ENCODE measurements at regions of chr12 and their contacts with region 1.

Region 1: GRCh38 chr12:48183091-48183875 is at the start of gene CCDC184:
- DNase-seq: peak; percentile 78
- ATAC-seq: peak; percentile 80
- H3K4me3 Mint-ChIP-seq: peak within 1 kb of the TSS; percentile 81
- H3K27ac Mint-ChIP-seq: peak within 1 kb of the TSS; percentile 31
- H3K4me1 Mint-ChIP-seq: peaks cover 20% of the 10 kb centered on the region
- H3K27me3 Mint-ChIP-seq: peaks cover 34% of the 10 kb centered on the region
- total RNA-seq, gene CCDC184: 0.25 to 0.37 TPM

Region 2: DNA sequence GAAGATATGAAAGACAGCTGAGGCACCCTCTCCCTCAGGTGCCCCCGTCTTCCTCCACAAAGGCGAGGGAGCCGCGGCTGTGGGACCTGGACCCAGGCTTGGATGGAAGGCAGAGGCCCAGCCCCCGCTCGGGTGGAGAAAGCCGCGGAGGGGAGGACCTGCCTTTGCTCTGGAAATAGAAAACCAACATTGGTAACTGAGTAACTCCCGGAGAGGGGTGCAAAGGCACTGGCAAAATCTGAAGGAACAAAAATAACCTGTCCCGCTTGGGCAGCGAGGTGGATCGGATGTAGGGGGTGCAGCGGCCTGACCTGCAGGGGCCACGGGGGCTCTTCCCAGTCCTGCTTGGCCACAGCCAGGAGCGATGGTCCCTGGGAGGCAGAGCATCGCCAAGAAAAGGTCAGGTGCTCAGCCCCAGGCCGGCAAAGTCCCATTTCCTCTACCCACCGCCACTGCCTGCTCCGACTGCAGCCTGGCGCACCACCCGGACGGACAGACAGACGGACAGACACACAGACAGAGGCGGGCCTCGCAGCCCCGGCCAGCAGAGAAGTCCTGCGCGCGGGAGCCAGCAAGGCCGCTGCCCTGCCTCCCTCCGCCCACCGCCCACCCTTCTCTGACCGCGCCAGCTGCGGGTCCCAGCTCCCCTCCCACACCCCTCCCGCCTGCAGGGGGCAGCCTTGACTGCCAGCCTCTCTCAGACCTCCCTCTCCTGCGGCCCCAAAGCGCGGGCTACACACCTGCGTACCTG is 241.3 kb before region 1 on chr12:
- CTCF ChIA-PET with region 1: no interaction called
- POLR2A ChIA-PET with region 1: no interaction called
- intact Hi-C with region 1: no loop called
- DNase-seq: peak; percentile 60
- ATAC-seq: peak; percentile 57
- H3K4me3 Mint-ChIP-seq: no peak overlapping the region
- H3K27ac Mint-ChIP-seq: no peak overlapping the region
- H3K4me1 Mint-ChIP-seq: peaks cover 4% of the 10 kb centered on the region
- H3K27me3 Mint-ChIP-seq: peaks cover 16% of the 10 kb centered on the region

Region 3: DNA sequence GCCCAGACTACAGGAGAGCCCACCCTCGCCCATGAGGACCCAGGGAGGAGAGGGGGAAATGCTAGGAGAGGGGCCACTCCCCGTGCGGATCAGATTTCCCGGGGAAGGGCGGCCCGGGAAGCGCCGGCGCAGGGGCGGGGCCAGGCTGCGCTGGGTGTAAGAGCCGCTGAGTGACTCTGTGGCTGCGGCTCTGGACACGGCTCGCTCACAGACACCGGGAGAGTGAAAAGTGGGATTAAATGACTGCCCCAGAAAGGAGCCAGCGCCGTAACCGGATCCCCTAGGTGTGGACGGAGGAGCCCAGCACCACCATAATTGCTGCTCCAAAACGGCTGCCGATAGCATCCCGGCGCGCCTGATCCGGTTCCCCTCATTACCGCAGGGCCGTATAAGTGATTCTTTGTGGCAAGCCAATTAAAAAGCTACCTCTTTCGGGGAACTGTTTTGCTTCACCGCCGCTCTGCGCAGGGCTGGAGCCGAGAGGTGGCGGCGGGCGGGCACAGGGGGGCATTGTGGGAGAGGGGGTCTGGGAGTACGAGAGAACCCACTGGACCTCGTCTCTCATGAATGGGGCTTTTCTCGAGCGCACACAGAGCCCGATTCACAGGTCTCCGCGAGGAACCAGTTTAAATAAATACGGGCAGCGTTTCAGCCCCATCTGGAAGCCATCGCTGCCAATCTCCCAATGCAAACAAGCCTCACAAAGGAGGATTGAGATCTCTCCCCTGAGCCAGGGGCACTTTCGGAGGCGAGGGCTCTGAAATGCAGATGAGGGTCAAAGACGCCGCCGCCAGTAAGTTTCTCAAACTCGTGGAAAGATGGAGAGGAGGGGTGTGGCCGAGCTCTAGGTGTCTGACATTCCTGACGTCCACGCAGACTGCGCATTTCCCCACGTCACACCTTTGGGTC is 181.5 kb before region 1 on chr12:
- CTCF ChIA-PET with region 1: no interaction called
- POLR2A ChIA-PET with region 1: no interaction called
- intact Hi-C with region 1: loop called (anchors 5 to 10 kb)
- DNase-seq: peak; percentile 24
- ATAC-seq: peak; percentile 27
- H3K4me3 Mint-ChIP-seq: peak overlapping the region; percentile 65
- H3K27ac Mint-ChIP-seq: no peak overlapping the region
- H3K4me1 Mint-ChIP-seq: peaks cover 32% of the 10 kb centered on the region
- H3K27me3 Mint-ChIP-seq: peaks cover 76% of the 10 kb centered on the region

Region 4: DNA sequence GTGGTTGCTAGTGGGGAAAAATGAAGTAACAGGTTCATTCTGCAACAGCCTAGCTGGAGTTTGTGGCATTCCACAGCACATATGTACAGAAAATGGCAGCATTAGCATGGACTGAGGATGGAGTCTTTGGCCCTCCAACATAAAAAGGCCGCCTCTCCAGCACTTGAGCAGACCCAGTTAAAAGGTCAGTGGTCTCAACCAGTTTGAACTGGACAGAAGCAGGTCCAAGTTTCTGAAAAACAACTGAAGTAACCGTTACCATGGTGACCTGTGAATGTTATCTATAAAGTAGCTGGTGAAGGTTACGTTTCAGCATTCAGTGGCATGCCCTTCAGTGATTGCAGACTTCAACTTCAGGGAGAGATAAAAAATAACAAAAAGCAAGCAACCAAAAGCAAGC is 53.9 kb after region 1 on chr12:
- CTCF ChIA-PET with region 1: no interaction called
- POLR2A ChIA-PET with region 1: no interaction called
- intact Hi-C with region 1: no loop called
- DNase-seq: no peak
- ATAC-seq: no peak
- H3K4me3 Mint-ChIP-seq: no peak overlapping the region
- H3K27ac Mint-ChIP-seq: no peak overlapping the region
- H3K4me1 Mint-ChIP-seq: no peaks in the 10 kb centered on the region
- H3K27me3 Mint-ChIP-seq: peaks cover 3% of the 10 kb centered on the region